Caco-2 (cell line): ENCODE measurements at regions of chr18 and their contacts with region 1.

Region 1: DNA sequence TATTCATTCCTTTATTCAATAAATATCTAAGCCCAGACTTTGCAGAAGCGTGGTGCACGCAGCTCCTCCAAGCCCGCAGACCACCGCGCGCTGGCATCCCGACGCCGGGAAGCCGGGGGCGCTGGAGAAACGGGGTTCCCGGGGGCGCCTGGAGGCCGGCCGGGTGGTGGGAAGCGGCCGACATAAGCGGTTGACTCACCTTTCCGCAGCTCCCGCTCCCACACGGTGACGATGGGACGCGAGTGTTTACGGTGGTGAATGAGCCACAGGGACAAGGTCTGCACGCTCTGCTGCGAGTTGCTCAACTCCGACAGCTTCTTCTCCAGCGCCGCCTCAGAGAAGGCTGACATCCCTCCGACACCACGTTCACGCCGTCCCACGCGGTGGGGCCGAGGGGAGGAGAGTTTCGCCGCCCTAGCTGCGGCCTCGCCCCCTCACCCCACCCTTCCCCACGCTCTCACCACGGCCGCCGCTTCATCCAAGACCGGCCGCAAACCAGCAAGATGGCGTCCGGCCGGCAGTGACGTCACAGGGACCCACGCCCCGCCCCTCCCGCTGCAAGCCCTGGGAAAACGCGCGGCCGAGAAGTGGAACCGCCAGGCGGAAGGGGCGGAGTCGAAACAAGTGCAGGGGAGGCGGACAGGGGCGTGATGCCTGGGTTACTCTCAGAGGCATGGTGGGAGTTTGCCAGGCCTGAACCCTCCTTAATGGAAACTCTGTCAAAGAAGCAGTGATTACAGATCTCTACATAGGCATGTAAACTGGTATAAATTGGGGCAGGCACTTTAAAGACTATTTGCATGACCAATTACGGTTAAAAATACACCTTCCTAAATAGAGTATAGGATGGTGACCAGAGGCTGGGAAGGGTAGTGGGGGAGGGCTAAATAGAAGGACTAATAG is at the start of gene RPRD1A:
- DNase-seq: peak; percentile 90 to 92
- H3K4me3 ChIP-seq: peak within 1 kb of the TSS; percentile 58
- H3K4me3 Mint-ChIP-seq: peak within 1 kb of the TSS; percentile 85
- H3K27ac Mint-ChIP-seq: peak within 1 kb of the TSS; percentile 79
- H3K4me1 ChIP-seq: no peaks in the 10 kb centered on the region
- H3K4me1 Mint-ChIP-seq: no peaks in the 10 kb centered on the region
- H3K27me3 ChIP-seq: no peaks in the 10 kb centered on the region
- H3K27me3 Mint-ChIP-seq: no peaks in the 10 kb centered on the region
- CTCF ChIP-seq: no peak
- total RNA-seq, gene RPRD1A: 18.9 and 21.1 TPM in 2 replicates

Region 2: GRCh38 chr18:35972197-35973052 is 94.9 kb before region 1 on chr18 and contains the start of gene RMP24:
- CTCF ChIA-PET with region 1: no interaction called
- POLR2A ChIA-PET with region 1: no interaction called
- intact Hi-C with region 1: loop called (anchors 5 kb)
- DNase-seq: peak; percentile 88 to 91
- H3K4me3 ChIP-seq: peak within 1 kb of the TSS; percentile 58
- H3K4me3 Mint-ChIP-seq: peak within 1 kb of the TSS; percentile 92
- H3K27ac Mint-ChIP-seq: peak within 1 kb of the TSS; percentile 92
- H3K4me1 ChIP-seq: no peaks in the 10 kb centered on the region
- H3K4me1 Mint-ChIP-seq: peaks cover 8% of the 10 kb centered on the region
- H3K27me3 ChIP-seq: no peaks in the 10 kb centered on the region
- H3K27me3 Mint-ChIP-seq: no peaks in the 10 kb centered on the region
- CTCF ChIP-seq: no peak

Region 3: GRCh38 chr18:36015629-36016028 is 51.7 kb before region 1 on chr18:
- CTCF ChIA-PET with region 1: no interaction called
- POLR2A ChIA-PET with region 1: no interaction called
- intact Hi-C with region 1: loop called (anchors 10 kb)
- DNase-seq: no peak
- H3K4me3 ChIP-seq: no peak overlapping the region
- H3K4me3 Mint-ChIP-seq: no peak overlapping the region
- H3K27ac Mint-ChIP-seq: no peak overlapping the region
- H3K4me1 ChIP-seq: no peaks in the 10 kb centered on the region
- H3K4me1 Mint-ChIP-seq: no peaks in the 10 kb centered on the region
- H3K27me3 ChIP-seq: no peaks in the 10 kb centered on the region
- H3K27me3 Mint-ChIP-seq: no peaks in the 10 kb centered on the region
- CTCF ChIP-seq: no peak

Region 4: GRCh38 chr18:36212301-36213171 is 145.2 kb after region 1 on chr18:
- CTCF ChIA-PET with region 1: no interaction called
- POLR2A ChIA-PET with region 1: no interaction called
- intact Hi-C with region 1: no loop called
- DNase-seq: no peak
- H3K4me3 ChIP-seq: no peak overlapping the region
- H3K4me3 Mint-ChIP-seq: no peak overlapping the region
- H3K27ac Mint-ChIP-seq: no peak overlapping the region
- H3K4me1 ChIP-seq: no peaks in the 10 kb centered on the region
- H3K4me1 Mint-ChIP-seq: no peaks in the 10 kb centered on the region
- H3K27me3 ChIP-seq: no peaks in the 10 kb centered on the region
- H3K27me3 Mint-ChIP-seq: no peaks in the 10 kb centered on the region
- CTCF ChIP-seq: no peak